Mucosa of descending colon (tissue), 3 donors: ENCODE measurements at regions of chr18 and their contacts with region 1.

Region 1: GRCh38 chr18:63518178-63519012 is 23.8 kb upstream of the SERPINB12 start:
- DNase-seq: peak in 1 of 3 donors; percentile 77
- ATAC-seq: peak; percentile 87
- H3K4me3 ChIP-seq: no peak overlapping the region
- H3K4me1 ChIP-seq: no peaks in the 10 kb centered on the region
- CTCF ChIP-seq: peak; percentile 32

Region 2: DNA sequence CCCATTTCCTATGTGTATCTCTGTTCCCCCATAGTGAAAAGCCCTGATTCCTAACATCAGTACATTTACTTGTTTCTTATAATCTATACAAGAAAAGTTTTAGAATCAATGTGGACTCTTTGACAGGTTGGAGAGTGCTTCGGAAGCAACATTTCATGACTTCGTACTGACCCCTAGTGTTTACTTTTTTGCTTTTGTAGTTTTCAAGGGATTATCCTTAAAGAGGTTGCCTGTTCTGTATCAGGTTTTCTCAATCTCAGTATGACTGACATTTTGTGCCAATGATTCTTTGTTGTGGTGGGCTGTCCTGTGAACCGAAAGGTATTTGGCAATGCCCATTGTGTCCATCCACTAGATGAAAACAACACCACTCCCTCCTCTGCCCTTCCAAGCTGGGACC is 325.9 kb after region 1 on chr18:
- intact Hi-C with region 1: loop called in 1 of 2 experiments (anchors 5 kb)
- DNase-seq: no peak
- ATAC-seq: no peak
- H3K4me3 ChIP-seq: no peak overlapping the region
- H3K4me1 ChIP-seq: no peaks in the 10 kb centered on the region
- CTCF ChIP-seq: no peak